Heart right ventricle (tissue), 16 donors: ENCODE measurements at regions of chr15 and their contacts with region 1.

Region 1: DNA sequence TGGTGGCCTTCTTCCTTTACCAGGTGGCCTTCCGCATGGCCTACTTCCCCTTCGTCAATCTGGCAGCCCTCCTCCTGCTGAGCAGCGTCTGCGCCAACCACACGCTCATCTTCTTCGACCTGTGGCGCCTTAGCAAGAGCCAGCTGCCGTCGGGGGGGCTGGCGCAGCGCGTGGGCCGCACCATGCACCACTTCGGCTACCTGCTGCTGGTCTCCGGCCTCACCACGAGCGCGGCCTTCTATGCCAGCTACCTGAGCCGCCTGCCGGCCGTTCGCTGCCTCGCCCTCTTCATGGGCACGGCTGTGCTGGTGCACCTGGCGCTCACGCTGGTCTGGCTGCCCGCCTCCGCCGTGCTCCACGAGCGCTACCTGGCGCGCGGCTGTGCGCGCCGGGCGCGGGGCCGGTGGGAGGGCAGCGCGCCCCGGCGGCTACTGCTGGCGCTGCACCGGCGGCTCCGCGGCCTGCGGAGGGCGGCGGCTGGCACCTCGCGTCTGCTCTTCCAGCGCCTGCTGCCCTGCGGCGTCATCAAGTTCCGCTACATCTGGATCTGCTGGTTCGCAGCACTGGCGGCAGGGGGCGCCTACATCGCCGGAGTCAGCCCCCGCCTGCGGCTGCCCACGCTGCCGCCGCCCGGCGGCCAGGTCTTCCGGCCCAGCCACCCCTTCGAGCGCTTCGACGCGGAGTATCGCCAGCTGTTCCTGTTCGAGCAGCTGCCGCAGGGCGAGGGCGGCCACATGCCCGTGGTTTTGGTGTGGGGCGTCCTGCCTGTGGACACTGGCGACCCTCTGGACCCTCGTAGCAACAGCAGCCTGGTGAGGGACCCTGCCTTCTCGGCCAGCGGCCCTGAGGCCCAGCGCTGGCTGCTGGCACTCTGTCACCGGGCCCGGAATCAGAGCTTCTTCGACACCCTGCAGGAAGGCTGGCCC is 9.9 kb downstream of the DISP2 start:
- DNase-seq: peak; percentile 79 to 84
- ATAC-seq: peak; percentile 60 to 79 (median 68)
- H3K4me3 ChIP-seq: peak overlapping the region in 9 of 10 donors; percentile 12 to 57 (median 38)
- H3K27ac ChIP-seq: peak overlapping the region; percentile 60 to 91 (median 85)
- H3K4me1 ChIP-seq: peaks cover 3 to 38% (median 29%) of the 10 kb centered on the region in 9 donors
- H3K27me3 ChIP-seq: no peaks in the 10 kb centered on the region
- CTCF ChIP-seq: peak; percentile 75 to 93 (median 88)

Region 2: GRCh38 chr15:40338041-40338657 is 29.8 kb before region 1 on chr15:
- intact Hi-C with region 1: loop called in 1 of 10 experiments (anchors 2 kb)
- DNase-seq: peak; percentile 78
- ATAC-seq: peak in 6 of 8 donors; percentile 20 to 39 (median 30)
- H3K4me3 ChIP-seq: peak overlapping the region in 8 of 10 donors; percentile 47 to 57 (median 50)
- H3K27ac ChIP-seq: peak overlapping the region in 9 of 10 donors; percentile 95 to 99 (median 98)
- H3K4me1 ChIP-seq: peaks cover 63 to 100% (median 96%) of the 10 kb centered on the region in 9 donors
- H3K27me3 ChIP-seq: no peaks in the 10 kb centered on the region
- CTCF ChIP-seq: peak; percentile 48 to 87 (median 76)

Region 3: GRCh38 chr15:40412095-40412759 is 44.3 kb after region 1 on chr15:
- intact Hi-C with region 1: loop called in 4 of 10 experiments (anchors 5 to 10 kb)
- DNase-seq: no peak
- ATAC-seq: peak in 1 of 8 donors; percentile 47
- H3K4me3 ChIP-seq: no peak overlapping the region
- H3K27ac ChIP-seq: no peak overlapping the region
- H3K4me1 ChIP-seq: peaks cover 0 to 7% (median under 1%) of the 10 kb centered on the region in 9 donors
- H3K27me3 ChIP-seq: no peaks in the 10 kb centered on the region
- CTCF ChIP-seq: no peak